ENCODE measurements at regions of chr9 and their contacts with region 1.

Region 1: DNA sequence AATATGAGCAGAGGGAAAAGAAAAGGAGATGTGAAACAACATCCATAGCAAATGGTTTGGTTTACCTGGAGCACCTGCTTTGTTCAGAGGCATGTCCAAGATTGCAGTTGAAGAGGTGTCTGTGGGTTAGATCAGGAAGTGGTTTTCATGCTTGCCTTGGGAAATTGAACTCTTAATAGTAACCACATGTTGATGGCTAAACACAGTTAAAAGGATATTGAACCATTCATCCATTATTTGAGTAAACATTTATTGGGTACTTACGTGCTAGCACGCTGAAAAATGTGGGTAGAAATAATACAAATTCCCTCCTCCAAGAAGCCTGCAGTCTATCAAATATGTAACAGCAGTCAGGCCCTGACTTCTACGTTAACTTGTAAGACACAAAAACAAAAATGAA is 235.7 kb upstream of the TNC start:
- DNase-seq: no peak
- H3K4me3 ChIP-seq: no peak overlapping the region
- H3K27ac ChIP-seq: no peak overlapping the region
- H3K4me1 ChIP-seq: no peaks in the 10 kb centered on the region
- H3K27me3 ChIP-seq: no peaks in the 10 kb centered on the region
- CTCF ChIP-seq: no peak
- POLR2A ChIP-seq: no peak

Region 2: DNA sequence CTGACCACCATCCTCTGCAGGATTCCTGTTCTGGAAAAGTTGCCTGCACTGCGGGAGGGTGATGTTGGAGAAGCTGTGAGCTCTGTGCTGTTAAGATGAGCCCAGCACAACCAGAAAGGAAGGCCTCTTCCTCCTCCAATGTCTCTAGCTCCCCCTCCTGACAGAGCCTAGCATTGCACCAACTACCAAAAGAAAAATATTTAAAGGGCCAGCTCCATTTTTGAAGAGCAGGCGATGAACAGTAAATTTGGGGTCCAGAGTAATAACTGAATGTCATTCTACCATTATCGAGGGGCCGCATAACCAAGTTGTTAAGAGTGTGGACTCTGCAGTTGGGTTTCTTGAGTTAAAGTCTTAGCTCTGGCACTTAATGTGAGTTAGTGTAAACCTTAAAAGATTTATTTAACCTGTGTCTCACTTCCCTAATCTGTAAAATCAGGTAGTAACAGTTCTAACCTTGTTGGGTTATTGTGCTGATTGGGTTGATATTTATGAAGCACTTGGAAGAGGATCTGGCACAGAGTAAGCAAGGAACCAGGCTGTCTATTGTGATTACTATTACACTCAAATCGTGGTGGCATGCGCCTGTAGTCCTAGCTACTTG is 700.0 kb before region 1 on chr9:
- intact Hi-C with region 1: loop called (anchors 5 kb)
- DNase-seq: peak; percentile 61 to 73
- H3K4me3 ChIP-seq: no peak overlapping the region
- H3K27ac ChIP-seq: no peak overlapping the region
- H3K4me1 ChIP-seq: no peaks in the 10 kb centered on the region
- H3K27me3 ChIP-seq: no peaks in the 10 kb centered on the region
- CTCF ChIP-seq: peak; percentile 75 to 88 (median 88)
- POLR2A ChIP-seq: no peak

Region 3: GRCh38 chr9:114666851-114667250 is 686.8 kb before region 1 on chr9:
- intact Hi-C with region 1: no loop called
- DNase-seq: no peak
- H3K4me3 ChIP-seq: no peak overlapping the region
- H3K27ac ChIP-seq: no peak overlapping the region
- H3K4me1 ChIP-seq: no peaks in the 10 kb centered on the region
- H3K27me3 ChIP-seq: no peaks in the 10 kb centered on the region
- CTCF ChIP-seq: no peak
- POLR2A ChIP-seq: no peak

Region 4: GRCh38 chr9:115398996-115399395 is 45.3 kb after region 1 on chr9:
- intact Hi-C with region 1: loop called (anchors 2 kb)
- DNase-seq: no peak
- H3K4me3 ChIP-seq: no peak overlapping the region
- H3K27ac ChIP-seq: no peak overlapping the region
- H3K4me1 ChIP-seq: no peaks in the 10 kb centered on the region
- H3K27me3 ChIP-seq: no peaks in the 10 kb centered on the region
- CTCF ChIP-seq: no peak
- POLR2A ChIP-seq: no peak

Region 5: DNA sequence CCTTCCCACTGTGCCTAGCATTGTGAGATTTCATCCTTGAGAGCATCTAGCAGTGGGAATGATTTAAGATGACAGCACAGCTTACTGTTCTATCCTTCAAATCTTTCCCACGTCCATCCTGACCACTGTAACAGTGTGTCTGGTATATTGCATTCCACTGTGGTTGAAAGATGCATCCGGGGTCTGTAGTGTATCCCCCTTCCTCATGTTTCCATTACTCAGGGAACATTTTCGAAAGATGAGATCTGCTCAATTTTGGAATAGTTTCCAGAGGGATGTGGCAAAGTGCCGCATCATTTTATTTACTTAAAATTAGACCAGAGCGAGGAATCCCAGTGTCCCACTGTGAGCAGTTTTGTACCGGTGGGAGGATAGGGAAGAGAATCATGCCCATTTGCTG is 392.8 kb after region 1 on chr9:
- intact Hi-C with region 1: no loop called
- DNase-seq: no peak
- H3K4me3 ChIP-seq: no peak overlapping the region
- H3K27ac ChIP-seq: no peak overlapping the region
- H3K4me1 ChIP-seq: no peaks in the 10 kb centered on the region
- H3K27me3 ChIP-seq: no peaks in the 10 kb centered on the region
- CTCF ChIP-seq: no peak
- POLR2A ChIP-seq: no peak

Measured in breast epithelium (tissue), 4 donors.